BJ (cell line): ENCODE measurements at regions of chr3 and their contacts with region 1.

Region 1: DNA sequence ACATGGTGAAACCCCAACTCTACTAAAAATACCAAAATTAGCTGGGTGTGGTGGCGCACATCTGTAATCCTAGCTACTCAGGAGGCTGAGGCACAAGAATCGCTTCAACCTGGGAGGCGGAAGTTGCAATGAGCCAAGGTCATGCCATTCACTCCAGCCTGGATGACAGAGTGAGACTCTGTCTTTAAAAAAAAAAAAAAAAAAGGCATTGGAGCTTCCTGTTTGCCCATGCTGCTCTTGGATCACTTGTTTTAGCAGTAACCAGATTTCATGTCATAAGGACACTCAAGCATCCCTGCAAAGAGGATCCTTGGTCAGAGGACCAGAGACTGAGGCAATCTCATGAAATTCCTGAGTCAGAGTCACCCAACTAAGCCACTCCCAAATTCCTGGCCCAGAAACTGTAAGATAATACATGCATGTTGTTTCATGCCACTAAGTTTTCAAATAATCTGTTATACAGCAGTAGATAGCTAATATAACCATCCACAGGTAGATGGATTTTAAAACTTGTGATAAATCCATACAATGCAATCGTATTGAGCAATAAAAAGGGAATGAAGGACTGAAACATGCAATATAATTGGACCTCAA is 82.0 kb upstream of the XXYLT1 start:
- DNase-seq: peak; percentile 87
- H3K4me3 ChIP-seq: no peak overlapping the region
- H3K27me3 ChIP-seq: no peaks in the 10 kb centered on the region
- CTCF ChIP-seq: no peak

Region 2: DNA sequence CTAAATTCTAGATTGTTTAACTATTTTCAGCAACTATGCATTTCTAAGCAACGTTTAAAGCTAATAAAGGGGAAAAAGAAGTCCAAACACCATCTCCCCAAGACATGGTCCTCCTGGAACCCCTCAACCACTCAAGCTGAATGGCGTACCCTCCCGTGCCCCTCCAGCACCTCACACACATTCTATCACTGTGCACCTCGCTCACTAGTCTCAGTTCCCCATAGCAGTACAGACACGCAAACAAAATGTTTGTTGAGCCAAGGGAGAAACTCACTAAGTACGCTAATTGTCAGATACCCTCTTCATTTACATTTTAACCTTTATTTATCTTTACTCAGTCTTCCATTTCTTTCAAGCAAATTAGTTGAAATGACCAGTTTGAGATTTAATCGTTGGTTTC is 41.0 kb after region 1 on chr3:
- CTCF ChIA-PET with region 1: no interaction called
- POLR2A ChIA-PET with region 1: interaction called, 10 read pairs
- DNase-seq: no peak
- H3K4me3 ChIP-seq: no peak overlapping the region
- H3K27me3 ChIP-seq: no peaks in the 10 kb centered on the region
- CTCF ChIP-seq: no peak